PC-9 (cell line): ENCODE measurements at regions of chr16 and their contacts with region 1.

Region 1: DNA sequence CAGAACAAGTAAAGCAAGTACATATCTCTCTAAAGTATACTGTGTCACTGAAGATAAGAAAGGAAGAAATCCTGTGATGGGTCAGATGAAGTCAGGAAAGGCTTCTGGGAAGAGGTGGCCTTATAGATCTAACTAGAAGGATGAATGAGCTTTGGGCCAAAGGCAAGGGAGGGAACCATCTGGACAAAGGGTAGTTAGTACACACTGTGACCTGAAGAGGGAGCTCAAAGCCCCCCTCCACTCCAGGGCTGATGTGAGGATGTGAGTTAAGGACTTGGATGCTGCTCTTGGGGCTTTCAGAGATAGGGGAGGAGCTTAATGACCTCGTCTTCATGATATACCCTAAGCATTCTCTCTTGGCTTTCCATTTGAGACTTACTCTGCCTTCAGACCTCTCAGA is 185.3 kb upstream of the CACNG3 start:
- DNase-seq: no peak
- H3K4me3 ChIP-seq: no peak overlapping the region
- H3K27ac ChIP-seq: no peak overlapping the region
- H3K4me1 ChIP-seq: no peaks in the 10 kb centered on the region
- H3K27me3 ChIP-seq: peaks cover 25% of the 10 kb centered on the region
- CTCF ChIP-seq: peak; percentile 62

Region 2: DNA sequence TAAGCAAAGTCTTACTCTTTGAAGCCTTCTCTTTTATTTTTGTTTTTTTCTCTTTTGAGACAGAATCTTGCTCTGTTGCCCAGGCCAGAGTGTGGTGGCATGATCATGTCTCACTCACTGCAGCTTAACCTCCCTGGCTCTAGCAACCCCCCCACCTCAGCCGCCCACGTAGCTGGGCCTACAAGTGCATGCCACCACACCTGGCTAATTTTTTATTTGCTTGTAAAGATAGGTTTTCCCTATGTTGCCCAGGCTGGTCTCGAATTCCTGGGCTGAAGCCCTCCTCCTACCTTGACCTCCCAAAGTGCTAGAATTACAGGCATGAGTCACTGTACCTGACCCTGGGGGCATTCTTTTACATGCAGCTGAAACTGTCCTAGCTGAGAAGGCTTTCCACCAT is 80.3 kb before region 1 on chr16:
- CTCF ChIA-PET with region 1: no interaction called
- POLR2A ChIA-PET with region 1: interaction called, 21 read pairs
- intact Hi-C with region 1: no loop called
- DNase-seq: no peak
- H3K4me3 ChIP-seq: no peak overlapping the region
- H3K27ac ChIP-seq: no peak overlapping the region
- H3K4me1 ChIP-seq: no peaks in the 10 kb centered on the region
- H3K27me3 ChIP-seq: peaks cover 13% of the 10 kb centered on the region; the same call in 1 of the 2 replicates
- CTCF ChIP-seq: no peak

Region 3: DNA sequence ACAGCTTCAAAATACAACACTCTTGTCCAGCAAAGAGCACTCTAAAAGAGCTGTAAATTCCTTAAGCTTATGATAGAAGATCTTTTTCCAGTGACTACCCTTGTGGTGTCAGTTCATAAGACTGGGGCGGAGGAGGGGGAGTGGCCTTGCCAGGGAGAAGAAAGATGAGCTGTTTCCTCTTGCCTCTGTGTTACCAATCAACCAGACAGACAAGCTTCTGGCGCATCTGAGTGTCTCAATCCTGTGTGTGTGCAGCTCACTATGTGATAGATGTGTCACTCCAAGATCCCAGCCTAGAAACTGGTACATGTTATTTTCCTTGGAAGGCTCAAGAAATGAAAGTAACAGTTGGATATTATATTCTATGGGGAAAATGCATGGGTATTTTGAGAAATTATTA is 17.9 kb after region 1 on chr16:
- CTCF ChIA-PET with region 1: interaction called, 12 read pairs
- POLR2A ChIA-PET with region 1: no interaction called
- intact Hi-C with region 1: no loop called
- DNase-seq: no peak
- H3K4me3 ChIP-seq: no peak overlapping the region
- H3K27ac ChIP-seq: no peak overlapping the region
- H3K4me1 ChIP-seq: no peaks in the 10 kb centered on the region
- H3K27me3 ChIP-seq: peaks cover 13% of the 10 kb centered on the region
- CTCF ChIP-seq: no peak